RWPE1 (cell line): ENCODE measurements at regions of chr10 and their contacts with region 1.

Region 1: GRCh38 chr10:48656241-48656913 is 28.3 kb upstream of the WDFY4 start:
- DNase-seq: peak; percentile 78
- H3K27ac ChIP-seq: peak overlapping the region; percentile 61; the same call in 1 of the 2 replicates
- CTCF ChIP-seq: peak; percentile 93

Region 2: DNA sequence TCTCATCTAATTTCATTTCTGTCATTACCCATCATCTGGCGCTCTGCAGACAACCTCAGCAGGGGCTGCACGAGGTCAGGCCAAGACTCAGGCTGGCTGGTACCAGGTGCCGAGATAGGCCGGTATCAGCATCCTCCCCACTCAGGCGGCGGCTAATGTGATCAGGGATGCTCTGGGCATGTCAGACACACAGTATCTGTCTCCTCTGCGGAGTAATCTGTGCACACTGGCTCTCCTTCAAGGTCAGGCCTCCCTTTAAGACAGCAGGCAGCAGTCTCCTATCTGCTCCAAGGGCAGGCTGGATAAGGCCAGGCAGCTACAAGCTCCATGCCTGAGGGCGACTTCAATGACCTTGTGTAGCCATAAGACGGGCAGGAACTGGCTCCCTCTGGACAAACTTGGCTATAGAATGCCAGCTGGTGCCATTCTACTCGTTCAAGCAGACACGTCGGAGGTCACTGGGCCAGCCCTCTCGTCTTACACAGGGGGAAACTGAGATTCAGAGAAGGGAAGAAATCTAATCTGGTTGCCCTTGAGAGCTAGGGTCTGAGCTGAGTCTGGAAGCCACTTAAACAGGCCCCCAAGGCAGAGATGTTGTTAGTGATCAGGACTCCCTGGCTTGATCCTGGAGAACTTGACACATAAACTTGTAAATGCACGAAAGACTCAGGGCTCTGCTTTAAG is 110.8 kb before region 1 on chr10:
- CTCF ChIA-PET with region 1: interaction called, 32 read pairs
- POLR2A ChIA-PET with region 1: no interaction called
- DNase-seq: no peak
- H3K27ac ChIP-seq: no peak overlapping the region
- CTCF ChIP-seq: no peak

Region 3: DNA sequence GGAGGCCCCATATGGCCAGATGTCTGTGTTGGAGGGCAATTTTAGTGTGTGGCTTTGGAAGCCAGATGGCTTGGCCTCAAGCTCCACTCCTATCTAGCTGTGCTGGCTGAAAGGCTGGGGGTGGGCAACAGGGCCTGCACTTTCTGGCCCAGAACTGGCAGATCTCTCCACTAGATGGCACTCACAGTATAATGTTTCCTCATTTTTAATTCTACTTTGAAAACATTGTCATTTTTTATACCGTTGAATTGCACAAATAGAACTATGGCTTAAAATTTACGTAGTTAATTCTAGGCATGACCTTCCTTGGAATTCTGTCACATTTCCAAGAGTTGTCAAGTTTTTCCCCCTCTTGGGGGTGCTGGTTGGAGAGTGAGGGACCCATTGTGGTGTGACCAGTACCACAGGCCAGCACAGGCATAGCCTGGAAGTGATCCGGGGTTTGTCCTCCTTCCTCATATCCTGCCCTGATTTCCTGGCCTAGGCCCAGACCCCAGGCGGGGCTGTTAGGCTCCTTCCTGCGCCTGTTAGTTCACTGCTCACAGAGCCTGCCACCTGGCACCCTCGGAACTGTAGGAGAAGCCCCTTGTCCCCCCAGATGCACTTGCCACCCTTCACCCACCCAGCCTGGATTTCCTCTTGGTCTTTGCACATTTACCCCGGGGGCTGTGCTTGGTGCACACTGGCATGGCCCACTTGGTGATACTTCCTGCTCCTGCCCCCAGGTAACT is 104.4 kb before region 1 on chr10:
- CTCF ChIA-PET with region 1: interaction called, 32 read pairs
- POLR2A ChIA-PET with region 1: interaction called, 4 read pairs
- DNase-seq: peak; percentile 64
- H3K27ac ChIP-seq: no peak overlapping the region
- CTCF ChIP-seq: peak; percentile 77